K562 (cell line): ENCODE measurements at regions of chr4 and their contacts with region 1.

Region 1: DNA sequence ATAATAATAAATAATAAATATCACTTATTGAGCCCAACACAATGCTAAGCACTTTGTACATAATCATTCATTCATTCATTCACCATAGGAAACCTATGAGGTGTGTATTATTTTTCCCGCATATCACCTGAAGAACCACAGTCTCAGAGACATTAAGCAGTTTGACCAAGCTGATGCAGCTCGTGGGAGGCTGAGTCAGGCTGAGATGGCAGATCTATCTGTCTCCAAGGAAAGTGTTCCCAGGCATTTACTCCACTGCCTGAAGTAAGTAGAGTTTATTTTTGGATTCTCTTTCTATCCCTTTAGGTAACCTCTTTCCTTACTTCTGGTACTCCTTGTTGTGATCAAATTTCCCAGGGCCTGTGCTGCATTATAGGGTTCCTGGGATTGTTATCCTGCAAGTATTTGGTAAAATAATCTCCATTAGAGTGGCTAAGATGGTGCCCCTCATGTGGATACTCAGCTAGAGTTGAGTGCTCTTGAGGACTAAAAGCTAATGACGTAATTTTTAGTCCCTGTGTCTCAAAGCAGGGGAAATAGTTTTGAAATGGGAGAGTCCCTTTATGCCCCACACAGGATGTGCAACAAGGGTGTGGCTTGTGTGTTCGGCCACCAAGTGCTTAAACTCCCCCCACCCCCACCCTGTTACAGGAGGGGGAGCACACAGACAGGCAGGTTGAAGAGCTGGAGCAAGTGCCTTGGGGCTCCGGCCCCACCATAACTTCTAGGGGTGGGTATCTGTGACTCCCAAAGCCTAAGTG is 467.0 kb downstream of the STIM2 start:
- DNase-seq: no peak
- ATAC-seq: no peak
- H3K4me3 ChIP-seq: no peak overlapping the region
- H3K27ac ChIP-seq: no peak overlapping the region
- H3K4me1 ChIP-seq: no peaks in the 10 kb centered on the region
- H3K27me3 ChIP-seq: no peaks in the 10 kb centered on the region
- CTCF ChIP-seq: no peak
- EP300 ChIP-seq: no peak
- POLR2A ChIP-seq: no peak
- RAD21 ChIP-seq: no peak

Region 2: GRCh38 chr4:26544421-26544820 is 783.2 kb before region 1 on chr4:
- CTCF ChIA-PET with region 1: no interaction called
- POLR2A ChIA-PET with region 1: no interaction called
- in situ Hi-C with region 1: no loop called
- intact Hi-C with region 1: no loop called
- DNase-seq: no peak
- ATAC-seq: no peak
- H3K4me3 ChIP-seq: no peak overlapping the region
- H3K27ac ChIP-seq: no peak overlapping the region
- H3K4me1 ChIP-seq: no peaks in the 10 kb centered on the region
- H3K27me3 ChIP-seq: no peaks in the 10 kb centered on the region
- CTCF ChIP-seq: no peak
- EP300 ChIP-seq: no peak
- POLR2A ChIP-seq: no peak
- RAD21 ChIP-seq: no peak

Region 3: GRCh38 chr4:27176400-27176799 is 151.2 kb before region 1 on chr4:
- CTCF ChIA-PET with region 1: no interaction called
- POLR2A ChIA-PET with region 1: no interaction called
- in situ Hi-C with region 1: no loop called
- intact Hi-C with region 1: loop called (anchors 10 kb)
- DNase-seq: peak in 2 of 4 experiments; percentile 7 to 18
- ATAC-seq: peak; percentile 67; the same call in 2 of the 3 replicates
- H3K4me3 ChIP-seq: no peak overlapping the region
- H3K27ac ChIP-seq: no peak overlapping the region
- H3K4me1 ChIP-seq: no peaks in the 10 kb centered on the region
- H3K27me3 ChIP-seq: no peaks in the 10 kb centered on the region
- CTCF ChIP-seq: peak; percentile 20 to 56 (median 46); a peak in 5 of 6 replicates
- EP300 ChIP-seq: no peak
- POLR2A ChIP-seq: no peak
- RAD21 ChIP-seq: peak; percentile 50 to 61